Activated CD4-positive, alpha-beta memory T cell treated with anti-CD3 and anti-CD28 coated beads for 36 hours (primary cell): ENCODE measurements at regions of chr1 and their contacts with region 1.

Region 1: GRCh38 chr1:1615256-1616044 is at the start of gene MIB2:
- DNase-seq: peak; percentile 97
- H3K4me3 Mint-ChIP-seq: peak within 1 kb of the TSS; percentile 90
- H3K27ac Mint-ChIP-seq: peak within 1 kb of the TSS; percentile 90
- H3K4me1 Mint-ChIP-seq: peaks cover 18% of the 10 kb centered on the region
- H3K27me3 Mint-ChIP-seq: no peaks in the 10 kb centered on the region
- total RNA-seq, gene MIB2: 31.1 to 36.1 TPM

Region 2: DNA sequence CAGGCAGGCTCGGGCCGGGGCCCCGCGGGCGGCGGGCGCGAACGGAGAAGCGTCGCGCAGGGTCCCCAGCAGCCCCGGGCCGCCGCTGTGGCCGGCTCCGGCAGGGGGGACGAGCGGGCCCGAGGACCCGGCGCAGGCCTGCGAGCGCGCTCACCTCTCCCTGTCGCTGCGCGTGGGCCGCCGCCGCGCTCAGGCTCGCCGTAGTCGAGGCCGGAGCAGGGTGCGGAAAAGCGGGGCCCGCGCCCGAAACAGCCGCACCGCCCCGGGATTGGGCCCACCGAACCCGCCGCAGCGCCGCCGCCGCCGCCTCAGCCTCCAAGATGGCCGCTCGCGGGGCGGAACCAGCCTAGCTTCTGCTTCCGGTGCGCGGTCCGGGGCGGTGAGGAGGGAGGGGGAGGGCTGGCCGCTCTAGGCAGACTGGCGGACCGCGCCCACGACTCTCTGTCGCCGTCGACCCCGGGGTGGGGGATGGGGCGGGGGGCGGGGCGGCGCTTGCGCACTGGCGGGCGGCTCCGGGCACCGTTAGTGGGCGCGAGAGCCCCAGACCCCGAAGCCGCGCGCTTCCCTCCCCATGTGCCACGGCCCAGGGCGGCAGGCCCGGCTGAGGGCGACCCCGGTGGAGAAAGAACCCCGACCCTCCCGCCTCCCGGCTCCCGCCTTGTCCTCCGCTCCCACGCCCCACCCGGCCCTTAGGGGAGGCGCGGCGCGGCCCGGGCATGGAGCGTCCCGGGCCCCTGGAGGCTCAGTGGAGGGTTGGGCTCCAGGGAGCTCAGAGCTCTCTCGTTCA is 341.7 kb before region 1 on chr1 and contains the start of gene UBE2J2:
- CTCF ChIA-PET with region 1: no interaction called
- POLR2A ChIA-PET with region 1: no interaction called
- intact Hi-C with region 1: no loop called
- DNase-seq: peak; percentile 96
- H3K4me3 Mint-ChIP-seq: peak within 1 kb of the TSS; percentile 88
- H3K27ac Mint-ChIP-seq: peak within 1 kb of the TSS; percentile 62
- H3K4me1 Mint-ChIP-seq: peaks cover 32% of the 10 kb centered on the region
- H3K27me3 Mint-ChIP-seq: no peaks in the 10 kb centered on the region
- total RNA-seq, gene UBE2J2: 58.7 to 61.6 TPM

Region 3: GRCh38 chr1:1630271-1630964 is 15.0 kb after region 1 on chr1:
- CTCF ChIA-PET with region 1: interaction called, 13 read pairs
- POLR2A ChIA-PET with region 1: interaction called, 3 read pairs
- intact Hi-C with region 1: loop called (anchors 2 kb)
- DNase-seq: peak; percentile 96
- H3K4me3 Mint-ChIP-seq: peak overlapping the region; percentile 74
- H3K27ac Mint-ChIP-seq: peak overlapping the region; percentile 81
- H3K4me1 Mint-ChIP-seq: peaks cover 7% of the 10 kb centered on the region
- H3K27me3 Mint-ChIP-seq: peaks cover 4% of the 10 kb centered on the region

Region 4: GRCh38 chr1:1703796-1704195 is 88.3 kb after region 1 on chr1:
- CTCF ChIA-PET with region 1: no interaction called
- POLR2A ChIA-PET with region 1: no interaction called
- intact Hi-C with region 1: no loop called
- DNase-seq: peak; percentile 6
- H3K4me3 Mint-ChIP-seq: no peak overlapping the region
- H3K27ac Mint-ChIP-seq: no peak overlapping the region
- H3K4me1 Mint-ChIP-seq: no peaks in the 10 kb centered on the region
- H3K27me3 Mint-ChIP-seq: no peaks in the 10 kb centered on the region

Region 5: GRCh38 chr1:1730870-1731269 is 115.4 kb after region 1 on chr1:
- CTCF ChIA-PET with region 1: no interaction called
- POLR2A ChIA-PET with region 1: no interaction called
- intact Hi-C with region 1: no loop called
- DNase-seq: no peak
- H3K4me3 Mint-ChIP-seq: no peak overlapping the region
- H3K27ac Mint-ChIP-seq: no peak overlapping the region
- H3K4me1 Mint-ChIP-seq: peaks cover 15% of the 10 kb centered on the region
- H3K27me3 Mint-ChIP-seq: no peaks in the 10 kb centered on the region